MCF 10A (cell line): ENCODE measurements at regions of chr7 and their contacts with region 1.

Region 1: DNA sequence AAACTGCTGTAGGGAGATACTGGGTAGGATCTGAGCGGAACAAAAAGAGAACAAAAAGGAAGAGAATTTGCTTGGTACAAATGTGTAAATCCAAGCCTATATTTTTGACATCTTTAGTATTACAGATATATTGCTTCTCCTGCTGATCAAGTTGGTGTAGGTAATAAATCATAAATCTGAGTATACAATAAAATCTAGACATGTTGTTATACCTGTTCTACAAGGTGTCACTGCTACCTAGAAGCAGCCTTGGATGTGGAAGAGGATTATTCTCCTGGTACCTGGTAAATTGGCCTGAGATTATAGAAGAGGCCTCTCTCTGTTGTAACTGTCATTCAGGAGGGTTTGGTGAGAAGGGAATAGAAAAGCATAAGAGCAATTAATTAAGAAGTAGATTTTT is 89.9 kb upstream of the LSM8 start:
- DNase-seq: no peak
- H3K4me3 Mint-ChIP-seq: no peak overlapping the region
- H3K27ac Mint-ChIP-seq: no peak overlapping the region
- H3K4me1 Mint-ChIP-seq: no peaks in the 10 kb centered on the region
- H3K27me3 Mint-ChIP-seq: no peaks in the 10 kb centered on the region
- CTCF ChIP-seq: no peak

Region 2: DNA sequence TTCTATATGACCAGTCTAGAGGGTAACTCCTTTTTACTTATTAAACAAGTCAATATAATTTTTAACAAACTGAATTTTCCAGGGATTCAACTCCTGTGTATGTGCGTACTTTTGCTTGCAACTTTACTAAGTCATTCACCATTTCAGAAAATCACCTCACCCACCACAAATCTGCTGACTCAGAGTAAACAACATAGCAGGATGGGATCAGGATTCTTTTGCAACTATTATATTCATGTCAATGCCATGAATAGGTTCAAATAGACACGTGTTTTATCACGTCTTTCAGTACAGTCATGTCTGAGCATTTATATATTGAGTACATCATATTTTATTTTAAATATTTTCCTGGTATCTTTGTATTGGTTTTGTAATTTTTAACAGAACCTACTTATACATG is 235.3 kb before region 1 on chr7:
- CTCF ChIA-PET with region 1: no interaction called
- POLR2A ChIA-PET with region 1: no interaction called
- intact Hi-C with region 1: no loop called
- DNase-seq: no peak
- H3K4me3 Mint-ChIP-seq: no peak overlapping the region
- H3K27ac Mint-ChIP-seq: no peak overlapping the region
- H3K4me1 Mint-ChIP-seq: no peaks in the 10 kb centered on the region
- H3K27me3 Mint-ChIP-seq: peaks cover 8% of the 10 kb centered on the region
- CTCF ChIP-seq: no peak

Region 3: DNA sequence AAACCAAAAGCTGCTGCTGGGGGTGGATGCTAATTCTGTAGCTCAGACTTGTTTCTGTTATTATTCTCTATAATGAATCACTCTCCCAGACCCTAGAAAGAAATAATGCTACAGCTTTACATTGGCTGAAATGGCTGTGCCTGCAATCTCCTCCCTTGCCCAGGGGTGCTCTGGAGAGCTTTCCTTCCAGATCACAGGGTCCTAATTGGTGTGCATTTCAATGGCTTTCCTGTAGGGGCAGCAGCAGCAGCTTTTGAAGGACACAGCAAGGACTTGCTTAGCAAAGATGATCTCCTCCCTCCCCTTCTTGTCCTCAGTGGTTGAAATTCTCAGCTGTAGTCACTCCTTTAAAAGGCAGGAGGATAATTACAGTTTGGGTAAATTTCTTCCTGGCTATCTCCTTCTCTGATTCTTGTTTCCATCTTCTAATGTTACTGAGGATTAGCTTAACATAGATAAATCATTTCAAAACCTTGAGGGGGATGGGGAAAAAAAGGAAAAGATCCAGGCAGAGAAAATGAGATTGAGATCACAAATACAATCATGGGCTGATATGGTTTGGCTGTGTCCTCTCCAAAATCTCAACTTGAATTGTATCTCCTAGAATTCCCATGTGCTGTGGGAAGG is 100.5 kb before region 1 on chr7:
- CTCF ChIA-PET with region 1: interaction called, 3 read pairs
- POLR2A ChIA-PET with region 1: no interaction called
- intact Hi-C with region 1: loop called (anchors 2 kb)
- DNase-seq: peak; percentile 64
- H3K4me3 Mint-ChIP-seq: no peak overlapping the region
- H3K27ac Mint-ChIP-seq: no peak overlapping the region
- H3K4me1 Mint-ChIP-seq: peaks cover 23% of the 10 kb centered on the region
- H3K27me3 Mint-ChIP-seq: no peaks in the 10 kb centered on the region
- CTCF ChIP-seq: peak; percentile 38